Posterior vena cava (tissue), 2 donors: ENCODE measurements at regions of chr2 and their contacts with region 1.

Region 1: GRCh38 chr2:238646281-238646680 is 201.6 kb upstream of the TWIST2 start:
- DNase-seq: peak; percentile 31

Region 2: GRCh38 chr2:238596571-238597551 is 49.4 kb before region 1 on chr2:
- intact Hi-C with region 1: loop called in 1 of 2 experiments (anchors 2 kb)
- DNase-seq: peak; percentile 89